B cell (primary cell): ENCODE measurements at regions of chr11 and their contacts with region 1.

Region 1: DNA sequence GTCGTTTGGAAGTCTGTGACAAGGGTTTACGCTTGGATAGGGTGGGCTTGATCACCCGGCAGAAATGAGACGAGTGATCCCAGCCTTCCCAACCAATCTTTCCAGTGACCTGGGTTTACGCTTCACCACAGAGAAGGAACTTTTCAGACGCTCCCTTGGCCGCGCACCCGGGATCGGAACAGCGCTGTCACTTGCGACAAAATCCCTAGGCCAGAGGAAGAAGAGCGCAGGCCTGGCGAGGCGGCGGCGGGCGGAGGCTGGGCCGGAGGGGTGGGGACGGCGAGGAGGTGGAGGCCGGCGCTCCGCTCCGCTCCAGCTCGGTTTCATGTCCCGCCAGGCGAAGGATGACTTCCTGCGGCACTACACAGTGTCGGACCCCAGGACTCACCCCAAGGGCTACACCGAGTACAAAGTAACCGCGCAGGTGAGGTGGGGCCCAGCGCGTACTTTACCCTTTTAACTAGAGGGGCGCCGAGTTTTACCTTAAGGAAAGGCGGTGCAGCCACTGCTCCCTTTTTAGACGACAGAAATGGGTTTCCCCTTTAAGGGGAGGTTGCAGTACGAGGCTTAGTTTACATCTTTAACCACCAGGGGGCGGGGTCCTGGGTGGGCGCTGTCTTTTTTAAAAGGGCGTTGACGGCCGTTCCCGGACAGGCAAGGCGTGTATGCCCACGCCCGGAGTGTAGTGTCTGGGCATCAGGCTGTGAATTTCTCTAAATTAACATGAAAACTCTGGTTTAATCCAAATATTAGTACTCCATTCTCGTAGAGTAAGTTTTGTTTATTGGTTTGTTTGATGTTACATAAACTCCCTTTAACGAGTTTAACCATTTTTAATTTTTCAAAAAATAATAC is at the start of gene SNX15:
- DNase-seq: peak; percentile 96
- ATAC-seq: peak; percentile 88
- H3K4me3 ChIP-seq: peak within 1 kb of the TSS; percentile 43 to 63 (median 53)
- H3K4me3 Mint-ChIP-seq: peak within 1 kb of the TSS; percentile 93
- H3K27ac ChIP-seq: peak within 1 kb of the TSS; percentile 55 to 73
- H3K27ac Mint-ChIP-seq: peak within 1 kb of the TSS; percentile 93
- H3K4me1 ChIP-seq: peaks cover 11 to 19% of the 10 kb centered on the region in 2 donors
- H3K4me1 Mint-ChIP-seq: peaks cover 17% of the 10 kb centered on the region
- H3K27me3 ChIP-seq: no peaks in the 10 kb centered on the region
- H3K27me3 Mint-ChIP-seq: no peaks in the 10 kb centered on the region
- CTCF ChIP-seq: peak; percentile 90
- total RNA-seq, gene SNX15: 28.5 and 30.4 TPM in 2 replicates

Region 2: DNA sequence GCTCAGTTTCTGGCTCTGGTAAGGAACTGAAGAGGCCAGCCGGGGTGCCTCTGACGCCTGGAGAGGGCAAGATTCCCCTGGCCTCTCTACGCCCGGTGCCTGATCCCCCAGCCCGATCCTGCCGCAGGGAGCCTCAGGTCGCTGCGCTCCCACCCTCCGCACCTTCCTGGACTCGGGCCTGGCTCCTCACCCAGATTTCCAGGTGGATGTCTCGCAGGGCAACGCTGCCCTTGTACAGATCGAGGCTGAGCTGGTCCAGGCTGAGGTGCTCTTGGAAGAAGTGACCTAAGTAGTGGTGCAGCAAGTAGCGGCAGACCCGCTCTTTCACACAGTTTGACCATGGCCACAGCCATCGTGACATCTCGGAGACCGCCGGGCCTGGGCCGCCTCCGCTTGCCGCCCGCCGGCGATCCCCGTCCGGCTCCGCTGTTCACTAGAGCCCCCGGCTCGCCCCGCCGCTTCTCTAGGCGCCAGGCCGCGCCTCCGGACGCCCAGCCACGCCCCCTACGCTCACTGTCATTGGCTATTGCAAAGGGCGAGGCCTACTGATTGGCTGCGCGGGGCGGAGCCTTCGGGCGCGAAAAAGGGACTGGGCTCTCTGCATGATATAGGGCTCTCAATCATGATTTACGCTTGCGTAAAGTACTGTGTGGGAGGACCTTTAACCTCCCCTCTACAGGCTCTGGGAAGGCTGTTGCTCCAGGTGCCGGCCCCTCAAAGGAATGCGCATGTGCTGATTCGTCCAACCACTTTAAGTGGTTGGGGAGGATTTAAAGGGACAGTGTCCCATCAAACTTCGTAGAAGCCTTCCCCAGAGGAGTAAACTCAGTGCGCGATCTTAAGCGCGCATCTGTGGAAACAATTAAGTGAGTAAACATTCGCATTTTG is 110.4 kb before region 1 on chr11 and contains the start of gene ATG2A:
- CTCF ChIA-PET with region 1: no interaction called
- POLR2A ChIA-PET with region 1: no interaction called
- intact Hi-C with region 1: loop called (anchors 1 kb)
- DNase-seq: peak; percentile 99
- ATAC-seq: peak; percentile 97
- H3K4me3 ChIP-seq: peak within 1 kb of the TSS; percentile 86 to 96 (median 90)
- H3K4me3 Mint-ChIP-seq: peak within 1 kb of the TSS; percentile 88
- H3K27ac ChIP-seq: peak within 1 kb of the TSS; percentile 44 to 84
- H3K27ac Mint-ChIP-seq: peak within 1 kb of the TSS; percentile 91
- H3K4me1 ChIP-seq: peaks cover 19 to 33% of the 10 kb centered on the region in 2 donors
- H3K4me1 Mint-ChIP-seq: peaks cover 34% of the 10 kb centered on the region
- H3K27me3 ChIP-seq: no peaks in the 10 kb centered on the region
- H3K27me3 Mint-ChIP-seq: no peaks in the 10 kb centered on the region
- CTCF ChIP-seq: no peak
- total RNA-seq, gene ATG2A: 38.6 and 43.4 TPM in 2 replicates

Region 3: GRCh38 chr11:64924102-64924851 is 103.2 kb before region 1 on chr11 and contains the start of gene PPP2R5B:
- CTCF ChIA-PET with region 1: no interaction called
- POLR2A ChIA-PET with region 1: interaction called, 6 read pairs
- intact Hi-C with region 1: loop called (anchors 1 kb)
- DNase-seq: peak; percentile 92
- ATAC-seq: peak; percentile 94
- H3K4me3 ChIP-seq: peak within 1 kb of the TSS; percentile 58 to 76 (median 69)
- H3K4me3 Mint-ChIP-seq: peak within 1 kb of the TSS; percentile 97
- H3K27ac ChIP-seq: peak within 1 kb of the TSS; percentile 69 to 81
- H3K27ac Mint-ChIP-seq: peak within 1 kb of the TSS; percentile 97
- H3K4me1 ChIP-seq: peaks cover 14 to 33% of the 10 kb centered on the region in 2 donors
- H3K4me1 Mint-ChIP-seq: peaks cover 22% of the 10 kb centered on the region
- H3K27me3 ChIP-seq: no peaks in the 10 kb centered on the region
- H3K27me3 Mint-ChIP-seq: no peaks in the 10 kb centered on the region
- CTCF ChIP-seq: no peak
- total RNA-seq, gene PPP2R5B: 22.6 and 24.2 TPM in 2 replicates

Region 4: GRCh38 chr11:65095974-65096806 is 68.8 kb after region 1 on chr11 and contains the start of gene VPS51:
- CTCF ChIA-PET with region 1: no interaction called
- POLR2A ChIA-PET with region 1: no interaction called
- intact Hi-C with region 1: loop called (anchors 1 kb)
- DNase-seq: peak; percentile 93
- ATAC-seq: peak; percentile 86
- H3K4me3 ChIP-seq: peak within 1 kb of the TSS; percentile 69 to 90 (median 77)
- H3K4me3 Mint-ChIP-seq: peak within 1 kb of the TSS; percentile 96
- H3K27ac ChIP-seq: peak within 1 kb of the TSS; percentile 77 to 81
- H3K27ac Mint-ChIP-seq: peak within 1 kb of the TSS; percentile 97
- H3K4me1 ChIP-seq: peaks cover 10 to 16% of the 10 kb centered on the region in 2 donors
- H3K4me1 Mint-ChIP-seq: peaks cover 24% of the 10 kb centered on the region
- H3K27me3 ChIP-seq: no peaks in the 10 kb centered on the region
- H3K27me3 Mint-ChIP-seq: no peaks in the 10 kb centered on the region
- CTCF ChIP-seq: no peak
- total RNA-seq, gene VPS51: 223 and 225 TPM in 2 replicates